Motor neuron (in vitro differentiated cells): ENCODE measurements at regions of chr22 and their contacts with region 1.

Region 1: GRCh38 chr22:20568989-20569769 is 61.8 kb downstream of the MED15 start:
- ATAC-seq: peak in 4 of 8 experiments; percentile 25 to 94 (median 90)
- H3K4me3 ChIP-seq: no peak overlapping the region
- H3K27ac ChIP-seq: peak overlapping the region in 1 of 2 donors; percentile 39
- H3K4me1 ChIP-seq: no peaks in the 10 kb centered on the region

Region 2: DNA sequence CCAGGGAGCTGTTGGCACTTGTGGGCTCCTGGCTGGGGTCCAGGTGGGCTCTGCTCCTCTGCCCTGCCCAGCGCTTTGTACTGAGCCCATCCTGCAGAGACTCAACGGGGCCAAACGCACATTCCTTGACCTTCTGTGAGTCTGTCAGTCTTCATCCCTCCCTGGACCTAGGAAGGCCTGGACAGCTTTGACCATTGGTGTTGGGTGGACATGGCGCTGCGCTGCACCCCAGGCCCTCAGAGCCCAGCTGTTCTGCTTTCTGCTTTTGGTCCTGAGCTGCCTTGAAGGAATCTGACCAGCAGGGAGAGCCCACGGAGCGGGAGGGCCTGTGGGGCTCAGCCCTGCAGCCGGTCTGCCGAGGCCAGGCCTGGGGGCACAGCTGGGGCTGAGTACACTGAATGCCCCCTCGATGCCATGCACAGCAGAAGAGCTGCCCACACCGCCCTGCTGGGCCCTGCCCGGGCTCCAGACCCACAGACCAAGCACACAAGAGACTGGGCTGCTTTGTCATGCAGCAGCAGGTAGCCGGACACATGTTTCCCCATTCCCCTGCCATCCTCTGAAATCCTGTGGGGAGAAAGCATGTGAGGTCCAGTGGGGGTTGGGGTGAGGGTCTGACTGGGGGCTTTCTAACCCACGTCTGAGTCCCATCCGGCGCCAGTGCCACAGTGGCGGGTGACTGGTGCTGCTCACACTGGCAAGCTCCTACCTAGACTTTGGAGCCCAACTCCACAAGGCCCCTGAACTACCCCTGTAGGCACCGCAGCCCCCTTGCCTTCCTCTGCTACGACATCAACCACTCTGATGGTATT is 394.2 kb before region 1 on chr22:
- in situ Hi-C with region 1: no loop called
- ATAC-seq: peak in 4 of 8 experiments; percentile 15 to 67 (median 42)
- H3K4me3 ChIP-seq: no peak overlapping the region
- H3K27ac ChIP-seq: peak overlapping the region in 1 of 2 donors; percentile 61
- H3K4me1 ChIP-seq: peaks cover 41 to 46% of the 10 kb centered on the region in 2 donors

Region 3: GRCh38 chr22:20656902-20657836 is 88.0 kb after region 1 on chr22:
- in situ Hi-C with region 1: loop called in 1 of 9 experiments (anchors 25 kb)
- ATAC-seq: peak in 3 of 8 experiments; percentile 22 to 46 (median 31)
- H3K4me3 ChIP-seq: no peak overlapping the region
- H3K27ac ChIP-seq: no peak overlapping the region
- H3K4me1 ChIP-seq: no peaks in the 10 kb centered on the region

Region 4: GRCh38 chr22:20840646-20841371 is 271.6 kb after region 1 on chr22:
- in situ Hi-C with region 1: no loop called
- ATAC-seq: peak in 1 of 8 experiments; percentile 56
- H3K4me3 ChIP-seq: no peak overlapping the region
- H3K27ac ChIP-seq: peak overlapping the region in 1 of 2 donors; percentile 35
- H3K4me1 ChIP-seq: no peaks in the 10 kb centered on the region